ENCODE measurements at regions of chr7 and their contacts with region 1.

Region 1: DNA sequence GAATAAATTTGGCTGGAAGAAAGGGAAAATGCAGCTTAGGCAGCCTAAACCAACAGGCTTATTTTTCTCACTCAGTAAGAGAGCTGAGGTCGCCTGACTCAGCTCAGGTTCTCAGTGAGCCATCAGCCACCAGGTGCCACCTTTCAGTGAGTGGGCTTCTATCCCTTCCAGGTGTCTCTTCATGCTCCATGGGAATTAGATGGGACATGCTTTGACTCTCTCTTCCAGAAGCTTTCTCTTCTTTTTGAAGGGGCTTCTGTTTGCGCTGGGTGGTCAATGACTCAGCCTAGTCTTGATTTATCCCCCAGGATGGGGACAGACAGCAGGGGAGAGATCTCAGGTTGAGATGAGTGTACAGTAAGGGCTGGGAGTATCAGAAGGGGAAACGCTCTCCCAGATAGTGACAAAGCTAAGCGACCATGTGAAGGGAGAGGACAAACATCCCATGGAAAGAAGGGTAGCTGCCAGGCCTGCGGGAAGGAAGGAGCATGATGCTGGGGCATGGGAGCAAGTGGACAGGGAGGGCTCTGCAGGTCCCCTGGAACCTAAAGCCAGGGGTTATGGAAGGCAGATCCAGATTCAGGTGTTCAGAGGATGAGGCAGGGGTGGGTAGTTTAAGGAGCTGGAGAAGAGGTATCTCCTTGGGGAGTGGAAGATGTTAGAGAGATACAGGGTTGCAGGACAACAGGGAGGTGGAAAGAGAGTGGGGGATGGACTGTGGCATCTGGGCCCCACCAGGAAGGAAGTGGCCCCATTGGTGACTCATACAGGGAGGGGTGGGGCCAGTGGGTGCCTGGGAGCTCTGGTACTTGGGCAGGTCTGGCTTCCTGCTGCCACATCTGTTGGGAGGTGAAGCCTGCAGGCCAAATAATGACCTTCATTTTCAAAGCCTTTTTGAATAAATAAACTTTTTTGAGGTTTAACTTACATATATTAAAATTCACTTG is 32.5 kb downstream of the OGDH start:
- DNase-seq: peak; percentile 80
- ATAC-seq: peak; percentile 88
- H3K4me3 ChIP-seq: peak overlapping the region; percentile 38; the same call in 1 of the 2 replicates
- H3K27ac ChIP-seq: peak overlapping the region; percentile 98
- H3K4me1 ChIP-seq: peaks cover 58% of the 10 kb centered on the region
- H3K27me3 ChIP-seq: no peaks in the 10 kb centered on the region
- CTCF ChIP-seq: peak; percentile 1 to 17 (median 8); a peak in 1 of 6 replicates
- EP300 ChIP-seq: peak; percentile 87 to 91
- POLR2A ChIP-seq: peak; percentile 45
- RAD21 ChIP-seq: peak; percentile 46

Region 2: DNA sequence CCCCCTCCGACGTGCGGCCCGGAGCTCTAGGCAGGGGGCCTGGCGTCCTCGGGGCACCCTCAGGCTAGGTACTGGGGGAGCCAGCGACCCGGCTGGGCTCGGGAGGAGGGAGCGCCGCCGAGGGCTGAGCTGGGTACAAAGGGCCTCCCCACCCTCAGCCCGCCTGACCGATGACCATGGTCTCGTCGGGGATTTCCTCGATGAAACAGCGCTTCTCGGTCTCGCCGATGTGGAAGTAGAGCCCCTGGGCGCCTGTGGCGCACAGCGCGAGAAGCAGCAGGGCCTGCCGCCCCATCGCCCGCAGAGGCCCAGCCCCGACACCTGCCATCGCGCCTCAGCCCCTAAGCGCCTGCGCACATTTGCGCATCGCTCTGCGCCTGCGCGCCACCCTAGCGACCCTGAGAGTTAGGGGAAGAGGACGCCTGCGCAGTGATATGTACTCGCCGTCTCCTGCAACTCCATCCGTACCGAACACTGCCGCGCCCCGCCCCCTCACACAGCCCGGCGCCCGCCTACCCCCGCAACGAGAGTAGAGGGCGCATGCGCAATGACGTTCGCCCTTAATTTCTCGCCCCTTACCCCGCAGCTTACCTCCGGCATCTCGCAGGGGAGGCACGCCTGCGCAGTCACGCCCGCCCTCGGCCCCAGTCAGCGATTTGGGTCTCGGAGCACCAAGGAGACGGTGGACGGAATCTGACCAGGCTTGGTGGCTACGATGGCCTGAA is 56.8 kb before region 1 on chr7 and contains the start of gene TMED4:
- CTCF ChIA-PET with region 1: interaction called, 3 read pairs
- POLR2A ChIA-PET with region 1: interaction called, 16 read pairs
- RAD21 ChIA-PET with region 1: no interaction called
- SMC1A ChIA-PET with region 1: interaction called, 9 read pairs
- in situ Hi-C with region 1: no loop called
- intact Hi-C with region 1: no loop called
- DNase-seq: peak; percentile 97
- ATAC-seq: peak; percentile 92
- H3K4me3 ChIP-seq: peak within 1 kb of the TSS; percentile 83
- H3K27ac ChIP-seq: peak within 1 kb of the TSS; percentile 86
- H3K4me1 ChIP-seq: peaks cover 4% of the 10 kb centered on the region; the same call in 1 of the 2 replicates
- H3K27me3 ChIP-seq: no peaks in the 10 kb centered on the region
- CTCF ChIP-seq: no peak
- EP300 ChIP-seq: no peak
- POLR2A ChIP-seq: peak; percentile 98
- RAD21 ChIP-seq: no peak
- polyA plus RNA-seq, gene TMED4: 20.8 to 21.0 TPM

Region 3: DNA sequence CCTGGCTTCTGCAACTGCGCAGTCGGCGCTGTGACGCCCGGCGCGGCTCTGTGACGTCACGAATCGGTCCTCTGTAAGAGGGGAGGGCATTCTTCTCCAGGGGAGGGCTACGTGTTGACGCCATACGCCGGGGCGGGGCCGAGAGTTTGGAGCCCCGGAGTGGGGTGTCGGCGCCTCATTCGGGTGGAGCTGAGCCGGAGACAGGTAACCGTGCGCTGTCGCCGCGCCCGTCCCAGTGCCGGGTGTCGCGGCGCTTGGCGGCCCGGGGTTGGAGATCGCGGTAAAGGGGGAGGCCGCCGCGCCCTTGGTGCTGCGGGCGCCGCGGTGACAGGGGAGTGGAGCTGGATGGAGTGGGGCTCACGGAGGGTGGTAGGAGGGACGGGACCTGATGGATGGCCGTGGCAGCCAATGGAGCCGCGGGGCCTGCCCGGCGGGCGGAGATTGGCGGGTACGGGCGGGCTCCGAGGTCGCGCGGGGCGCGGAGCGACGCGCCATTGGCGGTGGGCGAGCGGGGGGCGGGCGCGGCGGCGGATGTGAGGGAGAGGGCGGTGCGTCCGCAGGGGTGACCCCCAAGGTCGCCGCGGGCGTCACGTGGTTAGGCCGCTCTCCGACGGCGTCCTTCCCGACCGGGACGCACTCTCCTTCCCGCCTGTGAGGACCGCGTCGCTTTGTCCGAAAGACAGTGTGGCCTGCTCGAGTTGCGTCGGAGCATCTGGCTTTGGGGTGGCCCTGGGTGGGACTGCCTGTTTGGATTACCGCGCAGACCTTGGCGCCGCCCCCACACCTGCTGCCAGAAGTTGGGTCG is 32.2 kb before region 1 on chr7 and contains the start of gene OGDH:
- CTCF ChIA-PET with region 1: interaction called, 13 read pairs
- POLR2A ChIA-PET with region 1: interaction called, 95 read pairs
- RAD21 ChIA-PET with region 1: interaction called, 36 read pairs
- SMC1A ChIA-PET with region 1: interaction called, 103 read pairs
- in situ Hi-C with region 1: no loop called
- intact Hi-C with region 1: loop called (anchors 2 kb)
- DNase-seq: peak; percentile 87
- ATAC-seq: peak; percentile 98
- H3K4me3 ChIP-seq: peak within 1 kb of the TSS; percentile 91
- H3K27ac ChIP-seq: peak within 1 kb of the TSS; percentile 93
- H3K4me1 ChIP-seq: peaks cover 19% of the 10 kb centered on the region
- H3K27me3 ChIP-seq: no peaks in the 10 kb centered on the region
- CTCF ChIP-seq: no peak
- EP300 ChIP-seq: peak in 1 of 2 experiments; percentile 12; a peak in 1 of 4 replicates
- POLR2A ChIP-seq: peak; percentile 95
- RAD21 ChIP-seq: no peak
- polyA plus RNA-seq, gene OGDH: 4.1 to 4.2 TPM

Region 4: GRCh38 chr7:44615149-44615611 is 23.7 kb before region 1 on chr7:
- CTCF ChIA-PET with region 1: interaction called, 7 read pairs
- POLR2A ChIA-PET with region 1: interaction called, 23 read pairs
- RAD21 ChIA-PET with region 1: interaction called, 130 read pairs
- SMC1A ChIA-PET with region 1: interaction called, 106 read pairs
- in situ Hi-C with region 1: no loop called
- intact Hi-C with region 1: no loop called
- DNase-seq: no peak
- ATAC-seq: peak; percentile 58
- H3K4me3 ChIP-seq: no peak overlapping the region
- H3K27ac ChIP-seq: peak overlapping the region; percentile 46
- H3K4me1 ChIP-seq: peaks cover 40% of the 10 kb centered on the region
- H3K27me3 ChIP-seq: no peaks in the 10 kb centered on the region
- CTCF ChIP-seq: no peak
- EP300 ChIP-seq: no peak
- POLR2A ChIP-seq: no peak
- RAD21 ChIP-seq: no peak

Region 5: DNA sequence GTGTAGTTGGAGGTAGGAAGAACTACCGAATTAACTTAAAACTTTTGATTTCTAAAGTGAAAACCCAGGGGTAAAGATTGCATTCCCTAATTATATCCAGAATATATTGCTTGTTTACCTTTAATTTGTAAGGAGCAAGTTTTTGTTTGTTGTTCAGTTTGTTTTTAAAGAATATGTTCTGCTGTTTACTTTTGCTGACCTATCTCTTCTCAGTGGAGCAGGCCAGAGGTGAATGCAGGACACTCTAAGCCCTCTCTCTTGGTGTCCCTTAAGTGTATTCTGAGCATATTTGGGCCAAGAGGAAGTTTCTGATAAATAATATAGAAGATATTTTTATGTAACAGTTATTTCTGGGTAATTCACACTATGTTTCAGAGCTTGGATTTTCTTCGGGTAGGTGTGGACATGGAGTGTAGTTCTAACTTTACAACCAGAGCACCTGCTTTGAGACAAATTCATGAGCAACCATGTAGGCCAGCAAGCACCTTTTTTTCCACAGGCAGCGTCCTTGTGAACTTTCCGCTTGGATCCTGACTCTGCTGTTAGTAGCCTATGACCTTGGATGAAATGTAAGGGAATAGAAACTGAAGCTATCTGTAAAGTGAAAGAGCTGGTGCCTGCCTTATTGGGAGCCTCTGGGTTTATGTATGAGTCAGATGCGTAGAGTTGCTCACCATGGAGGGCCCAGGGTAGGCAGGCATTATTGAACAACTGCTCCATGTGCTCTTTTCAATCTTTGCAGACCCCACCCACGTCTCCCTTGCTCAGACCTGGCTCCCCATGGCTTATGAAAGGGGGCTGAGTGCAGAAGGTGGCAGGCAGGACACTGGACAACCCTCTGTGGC is 16.4 kb before region 1 on chr7:
- CTCF ChIA-PET with region 1: interaction called, 18 read pairs
- POLR2A ChIA-PET with region 1: interaction called, 27 read pairs
- RAD21 ChIA-PET with region 1: interaction called, 130 read pairs
- SMC1A ChIA-PET with region 1: interaction called, 106 read pairs
- in situ Hi-C with region 1: no loop called
- intact Hi-C with region 1: no loop called
- DNase-seq: no peak
- ATAC-seq: peak; percentile 91
- H3K4me3 ChIP-seq: peak overlapping the region; percentile 44
- H3K27ac ChIP-seq: peak overlapping the region; percentile 90
- H3K4me1 ChIP-seq: peaks cover 49% of the 10 kb centered on the region
- H3K27me3 ChIP-seq: no peaks in the 10 kb centered on the region
- CTCF ChIP-seq: no peak
- EP300 ChIP-seq: no peak
- POLR2A ChIP-seq: 0 out of 2 replicates have a peak, but pooled peaks have one; percentile 22
- RAD21 ChIP-seq: no peak

Region 6: GRCh38 chr7:44797329-44798251 is 158.7 kb after region 1 on chr7:
- CTCF ChIA-PET with region 1: interaction called, 3 read pairs
- POLR2A ChIA-PET with region 1: interaction called, 6 read pairs
- RAD21 ChIA-PET with region 1: interaction called, 4 read pairs
- SMC1A ChIA-PET with region 1: interaction called, 12 read pairs
- in situ Hi-C with region 1: no loop called
- intact Hi-C with region 1: no loop called
- DNase-seq: no peak
- ATAC-seq: peak; percentile 77
- H3K4me3 ChIP-seq: peak overlapping the region; percentile 96
- H3K27ac ChIP-seq: peak overlapping the region; percentile 99
- H3K4me1 ChIP-seq: peaks cover 3% of the 10 kb centered on the region
- H3K27me3 ChIP-seq: no peaks in the 10 kb centered on the region
- CTCF ChIP-seq: peak; percentile 57 to 61 (median 61)
- EP300 ChIP-seq: no peak
- POLR2A ChIP-seq: no peak
- RAD21 ChIP-seq: peak; percentile 24; the same call in 1 of the 2 replicates

Region 7: DNA sequence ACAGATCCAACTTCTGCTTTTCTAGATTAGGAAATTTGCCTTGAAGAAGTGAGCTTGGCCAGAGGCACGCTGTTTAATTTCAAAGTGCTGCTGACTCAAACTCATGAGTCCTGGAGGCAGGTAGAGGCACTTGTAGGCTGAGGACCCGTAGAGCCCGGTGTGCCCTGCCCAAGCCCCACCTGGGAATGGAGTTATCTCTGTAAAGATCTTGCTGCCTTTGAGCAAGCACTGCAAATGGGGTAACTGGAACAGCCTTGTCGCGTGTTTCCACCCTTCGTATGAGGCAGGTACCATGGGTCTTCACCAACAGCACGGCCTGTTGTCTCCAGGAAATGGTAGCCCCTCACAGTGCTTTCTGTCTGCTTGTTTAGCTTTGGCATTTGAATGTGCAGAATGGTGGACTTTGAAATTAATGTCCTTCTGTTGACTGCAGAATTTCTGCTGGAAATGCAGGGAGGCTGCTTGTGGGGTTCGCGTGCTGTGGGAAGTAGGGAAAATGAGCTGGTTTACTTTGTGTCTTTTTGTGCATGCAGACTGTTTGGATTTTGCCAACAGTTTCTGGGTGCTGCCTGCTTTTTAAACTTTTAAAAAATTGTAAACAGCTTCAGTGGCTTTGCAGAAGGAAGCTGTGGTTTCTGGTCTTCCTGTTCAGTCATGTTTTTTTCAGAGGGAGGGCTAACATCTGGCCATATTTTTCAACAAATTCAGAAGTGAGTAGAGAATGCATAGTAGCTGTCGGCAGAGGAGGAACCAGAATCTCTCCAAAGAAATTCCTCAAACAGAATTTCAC is 388.3 kb after region 1 on chr7:
- CTCF ChIA-PET with region 1: no interaction called
- POLR2A ChIA-PET with region 1: no interaction called
- RAD21 ChIA-PET with region 1: no interaction called
- SMC1A ChIA-PET with region 1: no interaction called
- in situ Hi-C with region 1: no loop called
- intact Hi-C with region 1: loop called (anchors 10 kb)
- DNase-seq: peak; percentile 40
- ATAC-seq: peak; percentile 71
- H3K4me3 ChIP-seq: peak overlapping the region; percentile 58
- H3K27ac ChIP-seq: peak overlapping the region; percentile 98
- H3K4me1 ChIP-seq: peaks cover 33% of the 10 kb centered on the region
- H3K27me3 ChIP-seq: no peaks in the 10 kb centered on the region
- CTCF ChIP-seq: no peak
- EP300 ChIP-seq: no peak
- POLR2A ChIP-seq: no peak
- RAD21 ChIP-seq: no peak

Measured in GM12878 (cell line).